Thyroid gland (tissue), 4 donors: ENCODE measurements at regions of chr2 and their contacts with region 1.

Region 1: GRCh38 chr2:99559075-99559662 is 69.4 kb upstream of the REV1 start:
- DNase-seq: peak; percentile 79 to 81
- H3K4me3 ChIP-seq: no peak overlapping the region
- H3K27ac ChIP-seq: no peak overlapping the region
- H3K4me1 ChIP-seq: no peaks in the 10 kb centered on the region
- H3K27me3 ChIP-seq: no peaks in the 10 kb centered on the region
- CTCF ChIP-seq: peak; percentile 88 to 98 (median 96)
- POLR2A ChIP-seq: no peak

Region 2: DNA sequence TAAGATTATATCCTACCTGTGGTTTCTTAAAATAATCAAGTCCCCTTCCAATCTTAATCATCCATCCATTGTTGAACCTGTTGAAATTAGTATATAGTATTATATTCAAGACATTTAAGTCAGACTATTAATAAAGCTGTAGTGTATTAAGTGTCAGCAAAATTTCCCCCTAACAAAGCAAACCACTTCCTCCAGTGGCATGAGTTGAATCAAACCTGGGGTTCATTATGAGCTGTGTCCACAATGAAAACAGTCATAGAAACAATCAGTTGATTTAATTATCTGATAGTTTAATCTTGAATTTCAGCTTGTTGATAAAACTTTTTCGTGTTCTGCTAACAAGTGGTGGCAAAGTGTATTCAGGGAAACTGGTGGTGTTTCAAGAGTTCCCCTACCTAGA is 389.6 kb before region 1 on chr2:
- intact Hi-C with region 1: no loop called
- DNase-seq: no peak
- H3K4me3 ChIP-seq: no peak overlapping the region
- H3K27ac ChIP-seq: no peak overlapping the region
- H3K4me1 ChIP-seq: peaks cover 5 to 8% of the 10 kb centered on the region in 2 donors
- H3K27me3 ChIP-seq: no peaks in the 10 kb centered on the region
- CTCF ChIP-seq: no peak
- POLR2A ChIP-seq: no peak

Region 3: DNA sequence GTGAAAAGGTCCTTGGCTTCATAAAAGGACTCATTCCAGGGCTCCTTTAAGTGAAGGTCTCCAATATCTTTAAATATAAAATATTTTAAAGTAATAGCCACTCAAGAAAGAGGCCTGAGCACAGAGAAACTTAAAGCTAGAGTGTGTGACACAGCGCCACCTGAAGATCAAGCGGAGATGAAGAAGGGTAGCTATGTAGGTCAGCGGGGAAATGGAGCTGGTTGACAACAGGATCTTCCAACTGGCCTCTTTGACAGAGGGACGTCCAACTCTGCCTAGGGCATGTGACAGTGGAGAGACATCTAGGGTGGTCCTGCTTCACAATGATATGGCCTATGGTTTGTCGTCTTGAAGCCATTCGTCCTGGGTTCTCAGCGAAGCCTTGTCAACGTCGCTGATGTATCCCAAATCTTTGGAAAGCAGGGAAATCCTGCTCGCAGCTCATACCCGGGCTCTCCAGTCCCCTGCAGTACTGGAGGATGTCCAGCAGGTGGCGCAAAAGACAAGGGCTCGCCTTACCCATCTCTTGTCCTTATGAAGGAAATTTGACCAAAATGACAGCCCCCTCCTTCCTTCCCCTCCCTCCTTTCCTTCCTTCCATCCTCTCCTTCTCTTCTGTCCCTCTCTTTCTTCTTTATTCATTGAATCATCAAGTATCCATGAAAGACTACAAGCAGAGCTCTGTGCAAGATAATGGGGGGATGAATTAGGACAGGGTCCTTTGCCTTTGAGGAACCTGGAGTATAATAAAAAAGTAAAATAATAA is 703.6 kb after region 1 on chr2:
- intact Hi-C with region 1: loop called (anchors 5 kb)
- DNase-seq: peak; percentile 58 to 74
- H3K4me3 ChIP-seq: no peak overlapping the region
- H3K27ac ChIP-seq: no peak overlapping the region
- H3K4me1 ChIP-seq: no peaks in the 10 kb centered on the region
- H3K27me3 ChIP-seq: no peaks in the 10 kb centered on the region
- CTCF ChIP-seq: peak; percentile 90 to 98 (median 94)
- POLR2A ChIP-seq: no peak

Region 4: GRCh38 chr2:100381240-100381639 is 822.1 kb after region 1 on chr2:
- intact Hi-C with region 1: loop called (anchors 5 kb)
- DNase-seq: peak; percentile 83 to 90
- H3K4me3 ChIP-seq: no peak overlapping the region
- H3K27ac ChIP-seq: no peak overlapping the region
- H3K4me1 ChIP-seq: no peaks in the 10 kb centered on the region
- H3K27me3 ChIP-seq: no peaks in the 10 kb centered on the region
- CTCF ChIP-seq: peak; percentile 68 to 92 (median 88)
- POLR2A ChIP-seq: no peak